Left cardiac atrium (tissue), 4 donors: ENCODE measurements at regions of chr12 and their contacts with region 1.

Region 1: GRCh38 chr12:112978163-112979040 is at the start of gene OAS2:
- DNase-seq: peak; percentile 78
- ATAC-seq: peak; percentile 95 to 96
- total RNA-seq, gene OAS2: 6.5 to 18.4 TPM

Region 2: DNA sequence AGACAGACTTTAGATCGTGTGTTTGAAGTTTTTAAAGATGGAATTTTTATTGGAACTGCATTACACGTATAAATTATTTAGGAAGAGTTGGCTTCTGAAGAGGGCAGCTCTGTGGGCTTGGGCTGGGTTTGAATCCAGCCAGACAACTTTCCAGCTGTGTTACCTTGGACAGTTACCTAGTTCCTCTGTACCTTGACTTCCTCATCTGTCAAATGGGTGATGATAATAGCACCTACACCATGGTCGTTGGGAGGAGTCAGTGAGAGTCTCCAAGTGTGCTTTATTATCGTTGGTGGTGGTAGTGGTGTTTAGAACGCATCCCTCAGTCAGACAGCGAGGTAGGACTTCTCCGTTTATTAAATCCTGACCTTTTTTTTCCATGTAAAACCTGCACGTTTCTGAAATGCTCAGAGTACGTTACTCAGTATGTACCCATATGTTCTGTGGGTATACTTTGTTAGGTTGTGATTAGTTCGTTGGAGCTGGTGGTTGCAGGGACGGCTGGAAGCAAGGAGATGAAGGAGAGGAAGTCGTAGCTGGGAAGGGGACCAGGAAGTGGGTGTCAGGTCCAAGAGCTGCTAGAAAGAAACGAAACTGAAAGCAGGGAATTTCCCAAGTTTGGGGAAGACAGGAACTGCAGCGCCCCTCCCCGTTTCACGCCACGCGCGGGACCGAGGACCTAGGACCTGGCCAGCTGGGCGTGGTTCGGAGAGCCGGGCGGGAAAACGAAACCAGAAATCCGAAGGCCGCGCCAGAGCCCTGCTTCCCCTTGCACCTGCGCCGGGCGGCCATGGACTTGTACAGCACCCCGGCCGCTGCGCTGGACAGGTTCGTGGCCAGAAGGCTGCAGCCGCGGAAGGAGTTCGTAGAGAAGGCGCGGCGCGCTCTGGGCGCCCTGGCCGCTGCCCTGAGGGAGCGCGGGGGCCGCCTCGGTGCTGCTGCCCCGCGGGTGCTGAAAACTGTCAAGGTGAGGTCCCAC is 40.4 kb before region 1 on chr12 and contains the start of gene OAS3:
- intact Hi-C with region 1: loop called in 1 of 2 experiments (anchors 2 kb)
- DNase-seq: peak; percentile 93
- ATAC-seq: peak; percentile 96 to 97
- total RNA-seq, gene OAS3: 8.1 to 19.4 TPM

Region 3: GRCh38 chr12:113030875-113031525 is 52.6 kb after region 1 on chr12:
- intact Hi-C with region 1: no loop called
- DNase-seq: peak; percentile 24
- ATAC-seq: peak; percentile 65 to 72